ENCODE measurements at regions of chr1 and their contacts with region 1.

Region 1: GRCh38 chr1:25022361-25023189 is 92.5 kb upstream of the RUNX3 start:
- DNase-seq: peak; percentile 93 to 99 (median 96)
- H3K4me3 ChIP-seq: peak overlapping the region; percentile 58
- H3K4me3 Mint-ChIP-seq: peak overlapping the region; percentile 48 to 84 (median 75)
- H3K27ac ChIP-seq: peak overlapping the region; percentile 97
- H3K27ac Mint-ChIP-seq: peak overlapping the region; percentile 89 to 100 (median 98)
- H3K4me1 ChIP-seq: peaks cover 79% of the 10 kb centered on the region
- H3K4me1 Mint-ChIP-seq: peaks cover 66 to 81% (median 75%) of the 10 kb centered on the region in 3 donors
- H3K27me3 ChIP-seq: no peaks in the 10 kb centered on the region
- H3K27me3 Mint-ChIP-seq: no peaks in the 10 kb centered on the region

Region 2: GRCh38 chr1:24987875-24988557 is 34.6 kb before region 1 on chr1:
- CTCF ChIA-PET with region 1: interaction called, 7 read pairs
- POLR2A ChIA-PET with region 1: interaction called, 13 read pairs
- DNase-seq: peak in 1 of 5 donors; percentile 30
- H3K4me3 ChIP-seq: no peak overlapping the region
- H3K4me3 Mint-ChIP-seq: peak overlapping the region in 3 of 7 donors; percentile 8 to 58 (median 57)
- H3K27ac ChIP-seq: no peak overlapping the region
- H3K27ac Mint-ChIP-seq: peak overlapping the region in 7 of 8 donors; percentile 32 to 93 (median 68)
- H3K4me1 ChIP-seq: peaks cover 99% of the 10 kb centered on the region
- H3K4me1 Mint-ChIP-seq: peaks cover 88 to 96% (median 94%) of the 10 kb centered on the region in 3 donors
- H3K27me3 ChIP-seq: no peaks in the 10 kb centered on the region
- H3K27me3 Mint-ChIP-seq: peaks cover 0 to 4% of the 10 kb centered on the region in 2 donors

Region 3: GRCh38 chr1:24996983-24997893 is 25.3 kb before region 1 on chr1:
- CTCF ChIA-PET with region 1: interaction called, 17 read pairs
- POLR2A ChIA-PET with region 1: interaction called, 18 read pairs
- DNase-seq: peak in 4 of 5 donors; percentile 35 to 85 (median 74)
- H3K4me3 ChIP-seq: peak overlapping the region; percentile 2
- H3K4me3 Mint-ChIP-seq: peak overlapping the region; percentile 5 to 74 (median 58)
- H3K27ac ChIP-seq: no peak overlapping the region
- H3K27ac Mint-ChIP-seq: peak overlapping the region; percentile 70 to 94 (median 90)
- H3K4me1 ChIP-seq: peaks cover 68% of the 10 kb centered on the region
- H3K4me1 Mint-ChIP-seq: peaks cover 88 to 93% (median 92%) of the 10 kb centered on the region in 3 donors
- H3K27me3 ChIP-seq: no peaks in the 10 kb centered on the region
- H3K27me3 Mint-ChIP-seq: no peaks in the 10 kb centered on the region

Region 4: GRCh38 chr1:25049190-25049589 is 26.6 kb after region 1 on chr1:
- CTCF ChIA-PET with region 1: no interaction called
- POLR2A ChIA-PET with region 1: no interaction called
- DNase-seq: no peak
- H3K4me3 ChIP-seq: no peak overlapping the region
- H3K4me3 Mint-ChIP-seq: no peak overlapping the region
- H3K27ac ChIP-seq: no peak overlapping the region
- H3K27ac Mint-ChIP-seq: no peak overlapping the region
- H3K4me1 ChIP-seq: no peaks in the 10 kb centered on the region
- H3K4me1 Mint-ChIP-seq: peaks cover 0 to 5% (median under 1%) of the 10 kb centered on the region in 3 donors
- H3K27me3 ChIP-seq: no peaks in the 10 kb centered on the region
- H3K27me3 Mint-ChIP-seq: no peaks in the 10 kb centered on the region

Region 5: DNA sequence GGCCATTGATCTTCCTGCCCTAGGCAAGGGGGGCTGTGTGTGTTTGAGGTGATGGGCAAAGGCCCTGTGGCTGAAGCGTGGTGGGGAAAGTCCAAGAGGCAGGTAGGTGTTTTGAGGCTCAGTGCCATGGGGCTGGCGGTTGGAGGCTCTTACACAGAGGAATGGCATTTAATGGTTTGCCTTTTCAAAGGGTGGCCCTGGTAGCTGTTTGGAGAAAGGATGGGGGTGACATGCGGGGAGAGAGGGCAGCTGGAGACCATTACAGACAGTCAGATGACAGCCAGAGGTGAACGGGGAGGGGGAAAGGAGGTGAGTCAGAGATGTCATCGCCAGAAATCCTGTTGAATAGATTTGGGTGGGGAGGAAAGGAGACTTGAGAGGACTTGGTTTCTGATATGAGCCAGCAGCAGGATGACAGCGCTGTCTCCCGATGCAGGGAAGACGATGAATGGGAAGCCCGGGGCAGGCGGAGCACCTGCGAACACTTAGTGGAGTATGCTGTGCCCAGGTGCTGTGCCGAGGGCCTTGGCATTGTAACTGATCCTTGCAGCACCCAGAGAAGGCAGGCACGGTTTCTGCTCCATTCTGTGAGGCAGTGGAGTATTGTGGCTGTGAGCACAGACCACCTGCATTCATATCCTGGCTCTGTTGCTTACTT is 650.3 kb after region 1 on chr1:
- CTCF ChIA-PET with region 1: no interaction called
- POLR2A ChIA-PET with region 1: no interaction called
- DNase-seq: no peak
- H3K4me3 ChIP-seq: no peak overlapping the region
- H3K4me3 Mint-ChIP-seq: no peak overlapping the region
- H3K27ac ChIP-seq: no peak overlapping the region
- H3K27ac Mint-ChIP-seq: peak overlapping the region in 4 of 8 donors; percentile 1 to 69 (median 22)
- H3K4me1 ChIP-seq: peaks cover 90% of the 10 kb centered on the region
- H3K4me1 Mint-ChIP-seq: peaks cover 54 to 78% (median 64%) of the 10 kb centered on the region in 3 donors
- H3K27me3 ChIP-seq: no peaks in the 10 kb centered on the region
- H3K27me3 Mint-ChIP-seq: no peaks in the 10 kb centered on the region